Naive thymus-derived CD4-positive, alpha-beta T cell (primary cell): ENCODE measurements at regions of chr1 and their contacts with region 1.

Region 1: DNA sequence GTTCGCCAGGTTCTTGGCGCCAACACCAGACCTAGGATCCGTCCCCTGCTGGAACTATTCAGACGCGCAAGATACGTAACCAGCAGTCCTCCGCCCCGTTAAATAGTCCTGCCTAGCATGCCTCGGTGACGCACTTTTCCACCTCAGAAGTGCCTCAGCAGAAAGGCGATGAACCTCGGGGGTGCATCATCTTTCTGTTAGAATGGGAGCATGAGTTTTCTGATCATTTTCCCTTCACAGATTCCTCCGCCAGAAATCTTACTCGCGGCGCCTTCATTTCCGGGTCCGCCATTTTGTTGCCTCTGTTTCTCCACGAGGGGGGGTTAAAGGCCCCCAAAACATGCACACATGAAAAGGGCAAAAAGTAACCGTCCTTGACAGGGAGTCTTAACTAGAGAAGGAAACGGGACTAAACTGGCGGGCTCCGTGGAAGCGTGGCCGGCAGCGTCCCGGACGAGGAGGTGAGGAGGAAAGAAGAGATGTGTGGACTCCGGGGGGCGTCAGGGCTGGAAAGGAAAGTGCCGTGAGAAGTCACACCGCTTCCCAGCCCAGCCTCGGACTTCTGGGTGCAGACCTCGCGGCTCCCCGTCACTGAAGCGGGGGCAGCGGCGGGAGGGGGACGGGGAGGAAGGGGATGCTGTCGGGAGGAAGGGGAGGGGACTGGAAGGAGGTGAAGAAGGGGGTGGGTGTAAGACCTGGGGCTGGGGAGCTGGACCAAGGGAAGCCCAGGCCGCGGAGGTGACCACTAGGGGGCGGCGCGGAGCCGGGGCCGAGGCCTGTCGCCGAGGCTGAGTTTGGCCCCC is at the start of gene GABPB2:
- DNase-seq: peak; percentile 78 to 94 (median 89)
- ATAC-seq: peak; percentile 91
- H3K4me3 ChIP-seq: peak within 1 kb of the TSS; percentile 99
- H3K4me3 Mint-ChIP-seq: peak within 1 kb of the TSS; percentile 94 to 100 (median 99)
- H3K27ac ChIP-seq: peak within 1 kb of the TSS; percentile 94
- H3K27ac Mint-ChIP-seq: peak within 1 kb of the TSS; percentile 97 to 100 (median 100)
- H3K4me1 ChIP-seq: peaks cover 8 to 9% of the 10 kb centered on the region in 2 donors
- H3K4me1 Mint-ChIP-seq: peaks cover 5 to 37% (median 29%) of the 10 kb centered on the region in 7 donors
- H3K27me3 ChIP-seq: no peaks in the 10 kb centered on the region
- H3K27me3 Mint-ChIP-seq: peaks cover 0 to 2% (median 0%) of the 10 kb centered on the region in 5 donors
- total RNA-seq, gene GABPB2: 13.7 to 42.2 (median 32.2) TPM

Region 2: DNA sequence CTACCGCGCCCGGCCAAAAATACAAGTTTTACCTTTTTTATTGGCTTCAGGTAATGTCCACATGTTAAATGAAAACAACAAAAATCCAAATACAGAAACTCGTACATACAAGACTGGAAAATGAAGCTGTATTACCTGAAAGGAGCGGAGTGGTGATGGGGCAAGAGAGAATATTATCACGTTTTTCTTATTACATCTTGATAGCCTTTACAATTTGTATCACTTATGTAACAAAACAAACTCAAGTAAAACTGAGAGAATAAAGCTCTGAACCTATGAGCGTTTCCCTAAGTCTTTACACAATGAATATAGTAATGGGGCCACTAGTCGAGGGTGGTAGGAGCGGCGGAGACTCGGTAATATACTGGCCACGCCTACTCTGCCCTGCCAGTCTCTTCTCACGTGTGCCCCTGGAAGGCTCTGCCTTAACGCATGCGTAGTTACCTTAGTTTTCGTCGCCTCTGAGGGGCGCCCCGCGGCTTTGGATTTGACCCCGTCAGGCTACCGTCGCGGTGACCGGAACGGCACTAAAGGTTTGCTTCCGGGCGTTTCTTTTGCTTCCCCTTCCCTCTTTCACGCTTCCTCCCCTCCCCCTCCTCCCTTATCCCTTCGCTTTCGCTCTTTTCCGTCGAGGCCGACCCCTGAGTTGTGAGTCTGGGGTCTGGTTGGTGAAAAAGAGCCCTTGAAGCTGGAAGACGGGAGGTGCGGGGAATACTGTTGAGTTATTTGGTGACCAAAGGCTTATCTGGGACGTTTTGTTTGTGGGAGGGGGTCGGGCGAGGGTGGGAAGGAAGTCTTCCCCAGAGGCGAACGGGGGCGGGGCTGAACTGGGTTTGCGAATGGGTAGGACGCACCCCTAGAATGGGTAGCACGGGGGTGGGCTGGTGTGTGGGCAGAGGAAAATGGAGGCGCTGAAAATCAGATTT is 144.6 kb before region 1 on chr1 and contains the start of gene SETDB1:
- CTCF ChIA-PET with region 1: no interaction called
- POLR2A ChIA-PET with region 1: no interaction called
- intact Hi-C with region 1: loop called in 1 of 2 experiments (anchors 5 kb)
- DNase-seq: peak; percentile 69 to 93 (median 90)
- ATAC-seq: peak; percentile 98
- H3K4me3 ChIP-seq: peak within 1 kb of the TSS; percentile 92
- H3K4me3 Mint-ChIP-seq: peak within 1 kb of the TSS; percentile 92 to 97 (median 94)
- H3K27ac ChIP-seq: peak within 1 kb of the TSS; percentile 91
- H3K27ac Mint-ChIP-seq: peak within 1 kb of the TSS; percentile 92 to 99 (median 95)
- H3K4me1 ChIP-seq: peaks cover 0 to 7% of the 10 kb centered on the region in 2 donors
- H3K4me1 Mint-ChIP-seq: peaks cover 15 to 35% (median 27%) of the 10 kb centered on the region in 7 donors
- H3K27me3 ChIP-seq: no peaks in the 10 kb centered on the region
- H3K27me3 Mint-ChIP-seq: no peaks in the 10 kb centered on the region
- total RNA-seq, gene SETDB1: 57.3 to 94.9 (median 61.7) TPM

Region 3: GRCh38 chr1:151047925-151048645 is 22.6 kb before region 1 on chr1:
- CTCF ChIA-PET with region 1: interaction called, 5 read pairs
- POLR2A ChIA-PET with region 1: interaction called, 18 read pairs
- intact Hi-C with region 1: loop called (anchors 1 to 2 kb)
- DNase-seq: peak; percentile 43 to 64 (median 55)
- ATAC-seq: peak; percentile 86
- H3K4me3 ChIP-seq: peak overlapping the region; percentile 73
- H3K4me3 Mint-ChIP-seq: peak overlapping the region; percentile 85 to 91 (median 90)
- H3K27ac ChIP-seq: peak overlapping the region; percentile 81
- H3K27ac Mint-ChIP-seq: peak overlapping the region; percentile 66 to 96 (median 93)
- H3K4me1 ChIP-seq: peaks cover 15 to 37% of the 10 kb centered on the region in 2 donors
- H3K4me1 Mint-ChIP-seq: peaks cover 37 to 89% (median 71%) of the 10 kb centered on the region in 7 donors
- H3K27me3 ChIP-seq: no peaks in the 10 kb centered on the region
- H3K27me3 Mint-ChIP-seq: no peaks in the 10 kb centered on the region

Region 4: DNA sequence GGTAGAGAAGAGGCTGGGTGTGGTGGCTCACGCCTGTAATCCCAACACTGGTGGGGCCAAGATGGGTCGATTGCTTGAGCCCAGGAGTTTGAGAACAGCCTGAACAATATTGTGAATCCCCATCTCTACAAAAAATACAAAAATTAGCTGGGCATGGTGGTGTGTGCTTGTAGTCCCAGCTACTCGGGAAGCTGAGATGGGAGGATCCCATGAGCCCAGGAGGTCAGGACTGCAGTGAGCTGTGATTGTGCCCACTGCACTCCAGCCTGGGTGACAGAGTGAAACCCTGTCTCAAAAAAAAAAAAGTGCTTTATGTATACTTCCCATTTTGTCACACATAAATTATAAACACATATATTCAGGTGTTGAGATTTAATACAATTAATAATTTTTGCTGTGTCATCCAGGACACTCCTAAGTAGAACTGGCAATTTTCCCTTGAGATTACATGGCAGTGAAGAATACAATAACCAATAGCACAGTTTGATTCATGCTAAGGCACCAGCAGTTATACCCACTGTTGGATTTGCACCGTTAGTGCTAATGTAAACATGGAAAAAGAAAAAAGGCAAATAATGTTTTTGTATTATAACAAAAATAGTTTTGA is 15.4 kb after region 1 on chr1:
- CTCF ChIA-PET with region 1: no interaction called
- POLR2A ChIA-PET with region 1: interaction called, 11 read pairs
- intact Hi-C with region 1: no loop called
- DNase-seq: no peak
- ATAC-seq: no peak
- H3K4me3 ChIP-seq: no peak overlapping the region
- H3K4me3 Mint-ChIP-seq: no peak overlapping the region
- H3K27ac ChIP-seq: no peak overlapping the region
- H3K27ac Mint-ChIP-seq: no peak overlapping the region
- H3K4me1 ChIP-seq: no peaks in the 10 kb centered on the region
- H3K4me1 Mint-ChIP-seq: peaks cover 0 to 2% (median 0%) of the 10 kb centered on the region in 7 donors
- H3K27me3 ChIP-seq: no peaks in the 10 kb centered on the region
- H3K27me3 Mint-ChIP-seq: no peaks in the 10 kb centered on the region

Region 5: DNA sequence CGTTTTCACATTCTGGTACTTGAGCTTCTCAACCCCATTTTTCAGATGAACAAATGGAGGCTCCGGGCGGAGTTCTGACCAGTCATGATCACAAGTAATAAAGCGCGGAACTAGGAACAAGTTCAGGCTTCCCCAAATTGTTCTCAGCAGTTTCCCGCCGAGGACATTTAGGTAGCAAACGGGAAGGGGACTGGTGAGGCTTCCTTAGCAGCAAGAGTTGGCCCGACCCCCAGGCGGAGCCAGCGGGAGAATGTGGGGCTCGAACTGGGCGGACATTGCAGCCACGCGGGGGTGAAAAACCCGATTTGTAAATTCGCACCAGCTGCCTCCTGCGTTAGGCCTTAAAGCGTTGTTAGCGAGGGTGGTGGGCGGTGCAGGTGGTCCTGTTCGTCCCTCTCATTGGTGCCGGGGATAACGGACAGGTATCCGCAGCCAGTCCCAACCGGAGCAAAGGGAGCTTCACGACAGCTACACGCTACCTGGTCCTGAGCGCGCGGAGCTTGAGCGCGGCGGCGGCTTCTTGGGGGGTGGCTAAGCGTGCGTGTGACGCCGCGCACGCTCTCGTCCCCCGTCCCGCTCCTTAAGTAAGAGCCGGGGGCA is 60.4 kb after region 1 on chr1:
- CTCF ChIA-PET with region 1: no interaction called
- POLR2A ChIA-PET with region 1: no interaction called
- intact Hi-C with region 1: loop called in 1 of 2 experiments (anchors 1 kb)
- DNase-seq: peak; percentile 37 to 92 (median 86)
- ATAC-seq: peak; percentile 99
- H3K4me3 ChIP-seq: peak overlapping the region; percentile 49
- H3K4me3 Mint-ChIP-seq: peak overlapping the region; percentile 70 to 88 (median 83)
- H3K27ac ChIP-seq: peak overlapping the region; percentile 58
- H3K27ac Mint-ChIP-seq: peak overlapping the region; percentile 13 to 94 (median 84)
- H3K4me1 ChIP-seq: peaks cover 0 to 4% of the 10 kb centered on the region in 2 donors
- H3K4me1 Mint-ChIP-seq: peaks cover 4 to 15% (median 11%) of the 10 kb centered on the region in 7 donors
- H3K27me3 ChIP-seq: no peaks in the 10 kb centered on the region
- H3K27me3 Mint-ChIP-seq: peaks cover 0 to 12% (median 0%) of the 10 kb centered on the region in 5 donors

Region 6: GRCh38 chr1:151165738-151166505 is 95.2 kb after region 1 on chr1 and contains the starts of genes LYSMD1 and SCNM1:
- CTCF ChIA-PET with region 1: no interaction called
- POLR2A ChIA-PET with region 1: no interaction called
- intact Hi-C with region 1: loop called in 1 of 2 experiments (anchors 2 kb)
- DNase-seq: peak; percentile 78 to 98 (median 97)
- ATAC-seq: peak; percentile 98
- H3K4me3 ChIP-seq: peak within 1 kb of the TSS; percentile 97
- H3K4me3 Mint-ChIP-seq: peak within 1 kb of the TSS; percentile 87 to 99 (median 95)
- H3K27ac ChIP-seq: peak within 1 kb of the TSS; percentile 71
- H3K27ac Mint-ChIP-seq: peak within 1 kb of the TSS; percentile 90 to 99 (median 97)
- H3K4me1 ChIP-seq: peaks cover 18 to 19% of the 10 kb centered on the region in 2 donors
- H3K4me1 Mint-ChIP-seq: peaks cover 30 to 70% (median 52%) of the 10 kb centered on the region in 7 donors
- H3K27me3 ChIP-seq: no peaks in the 10 kb centered on the region
- H3K27me3 Mint-ChIP-seq: peaks cover 0 to 3% (median 0%) of the 10 kb centered on the region in 5 donors
- total RNA-seq, gene LYSMD1: 1.4 to 3.3 (median 2.3) TPM
- total RNA-seq, gene SCNM1: 37.1 to 73.1 (median 57.1) TPM